Aorta (tissue), 5 donors: ENCODE measurements at regions of chr14 and their contacts with region 1.

Region 1: DNA sequence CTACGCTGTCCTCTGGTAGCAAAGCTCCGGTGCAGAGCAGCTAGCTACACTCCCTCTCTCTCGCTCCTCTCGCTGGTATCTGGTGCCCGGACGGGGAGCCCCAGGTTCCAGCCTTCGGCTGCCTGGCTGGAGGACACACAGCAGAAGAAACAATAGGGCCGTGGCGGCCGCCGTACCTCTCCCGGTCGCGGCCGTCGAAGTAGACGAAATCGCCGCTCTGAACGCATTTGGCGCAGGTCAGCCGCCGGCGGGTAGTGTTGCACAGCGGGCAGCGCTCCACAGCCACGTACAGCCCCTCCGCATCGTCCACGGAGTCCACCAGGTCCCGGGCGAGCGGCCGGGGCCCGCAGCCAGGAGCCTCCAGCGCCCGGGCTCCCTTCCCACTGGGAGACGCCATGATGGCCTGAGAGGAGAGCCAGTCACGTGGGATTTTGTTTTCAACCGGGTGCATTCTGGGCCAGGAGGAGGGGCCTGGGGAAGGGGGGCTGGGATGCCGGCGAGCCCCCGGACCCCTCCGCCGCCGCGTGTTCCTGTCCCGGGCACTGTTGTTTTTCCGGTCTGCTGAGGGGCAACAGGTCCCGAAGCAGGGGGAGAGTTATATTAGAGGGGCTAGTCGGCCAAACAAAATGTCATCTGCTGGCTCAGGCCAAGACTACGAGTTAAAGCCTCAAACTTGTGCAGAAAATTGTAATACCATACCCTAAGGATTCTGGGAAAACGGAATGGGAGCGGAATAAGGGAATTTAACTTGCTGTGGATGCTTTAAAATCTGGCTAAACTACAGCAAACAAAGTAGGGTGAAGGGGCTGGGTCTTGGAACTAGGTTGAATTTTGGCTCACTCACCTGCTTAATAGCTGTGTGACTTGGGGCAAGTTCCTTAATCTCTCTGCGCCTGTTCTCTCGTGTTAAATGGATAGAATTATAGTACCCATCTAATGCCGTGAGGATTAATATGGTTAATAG is at the start of gene ATG14:
- DNase-seq: peak; percentile 91 to 93
- ATAC-seq: peak; percentile 98
- H3K4me3 ChIP-seq: peak within 1 kb of the TSS; percentile 77 to 90
- H3K27ac ChIP-seq: peak within 1 kb of the TSS; percentile 46 to 55
- H3K4me1 ChIP-seq: peaks cover 2 to 6% of the 10 kb centered on the region in 2 donors
- H3K27me3 ChIP-seq: no peaks in the 10 kb centered on the region
- total RNA-seq, gene ATG14: 18.7 to 19.4 TPM

Region 2: GRCh38 chr14:55265197-55265596 is 146.5 kb before region 1 on chr14:
- intact Hi-C with region 1: loop called (anchors 10 kb)
- DNase-seq: no peak
- ATAC-seq: no peak
- H3K4me3 ChIP-seq: no peak overlapping the region
- H3K27ac ChIP-seq: no peak overlapping the region
- H3K4me1 ChIP-seq: peaks cover 3 to 5% of the 10 kb centered on the region in 2 donors
- H3K27me3 ChIP-seq: no peaks in the 10 kb centered on the region

Region 3: DNA sequence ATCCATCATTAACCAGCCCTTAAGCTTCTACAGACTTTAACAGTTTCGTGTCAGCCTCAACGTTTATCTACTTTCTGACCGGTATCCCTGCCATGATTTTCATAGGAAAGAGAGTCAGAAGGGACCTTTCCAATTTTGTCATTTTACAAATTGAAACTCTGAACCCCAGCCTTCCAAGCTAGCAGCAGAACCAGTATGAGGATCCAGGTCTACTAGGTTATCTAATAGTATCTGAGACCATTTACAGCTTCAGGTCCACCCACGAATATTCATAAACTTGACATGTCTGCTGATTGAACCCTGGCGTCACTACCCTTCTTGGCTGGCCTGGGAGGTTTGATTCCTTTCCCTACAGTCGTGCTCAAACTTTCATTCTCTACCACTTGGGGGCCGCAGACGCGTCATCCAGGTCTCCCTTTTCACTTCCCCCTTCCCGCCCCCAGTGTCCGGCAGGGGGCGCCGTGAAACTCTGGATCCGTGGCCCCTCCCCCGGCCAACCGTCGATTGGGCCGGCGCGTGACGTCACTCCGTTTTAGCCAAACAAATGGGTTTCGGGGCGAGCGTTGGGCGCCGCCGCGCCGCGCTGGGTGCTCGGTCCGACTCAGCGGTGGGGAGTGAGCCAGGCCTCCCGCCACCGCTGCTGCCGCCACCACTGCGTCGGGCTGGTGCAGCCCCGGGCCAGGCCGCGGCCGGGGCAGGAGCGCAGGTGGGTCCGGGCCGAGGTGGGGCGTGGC is 140.7 kb before region 1 on chr14 and contains the start of gene FBXO34:
- intact Hi-C with region 1: loop called (anchors 10 kb)
- DNase-seq: peak; percentile 99 to 100
- ATAC-seq: peak; percentile 98
- H3K4me3 ChIP-seq: peak within 1 kb of the TSS; percentile 60 to 79
- H3K27ac ChIP-seq: peak within 1 kb of the TSS; percentile 7 to 64
- H3K4me1 ChIP-seq: peaks cover 3 to 5% of the 10 kb centered on the region in 2 donors
- H3K27me3 ChIP-seq: no peaks in the 10 kb centered on the region
- total RNA-seq, gene FBXO34: 22.2 to 23.1 TPM

Region 4: DNA sequence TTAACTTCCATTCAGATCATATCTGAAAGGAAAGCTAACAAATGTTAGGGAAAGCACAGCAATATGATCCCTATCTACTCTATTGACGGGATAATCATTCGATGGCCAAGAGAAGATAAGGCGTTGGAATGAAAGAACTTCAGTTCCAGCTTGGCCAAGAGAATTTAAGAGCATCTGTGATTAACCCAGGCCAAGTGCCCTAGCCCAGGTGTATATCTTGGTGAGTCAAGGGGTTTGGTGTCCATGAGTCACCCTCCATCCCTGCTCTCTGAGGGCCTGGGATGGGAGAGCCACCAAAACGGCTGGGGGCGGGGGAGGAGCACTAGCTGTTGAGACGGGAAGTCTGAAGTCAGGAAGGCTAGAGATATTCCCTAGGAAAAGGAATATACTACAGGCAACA is 15.7 kb after region 1 on chr14:
- intact Hi-C with region 1: no loop called
- DNase-seq: no peak
- ATAC-seq: no peak
- H3K4me3 ChIP-seq: no peak overlapping the region
- H3K27ac ChIP-seq: no peak overlapping the region
- H3K4me1 ChIP-seq: no peaks in the 10 kb centered on the region
- H3K27me3 ChIP-seq: no peaks in the 10 kb centered on the region